AG04450 (cell line): ENCODE measurements at regions of chr3 and their contacts with region 1.

Region 1: DNA sequence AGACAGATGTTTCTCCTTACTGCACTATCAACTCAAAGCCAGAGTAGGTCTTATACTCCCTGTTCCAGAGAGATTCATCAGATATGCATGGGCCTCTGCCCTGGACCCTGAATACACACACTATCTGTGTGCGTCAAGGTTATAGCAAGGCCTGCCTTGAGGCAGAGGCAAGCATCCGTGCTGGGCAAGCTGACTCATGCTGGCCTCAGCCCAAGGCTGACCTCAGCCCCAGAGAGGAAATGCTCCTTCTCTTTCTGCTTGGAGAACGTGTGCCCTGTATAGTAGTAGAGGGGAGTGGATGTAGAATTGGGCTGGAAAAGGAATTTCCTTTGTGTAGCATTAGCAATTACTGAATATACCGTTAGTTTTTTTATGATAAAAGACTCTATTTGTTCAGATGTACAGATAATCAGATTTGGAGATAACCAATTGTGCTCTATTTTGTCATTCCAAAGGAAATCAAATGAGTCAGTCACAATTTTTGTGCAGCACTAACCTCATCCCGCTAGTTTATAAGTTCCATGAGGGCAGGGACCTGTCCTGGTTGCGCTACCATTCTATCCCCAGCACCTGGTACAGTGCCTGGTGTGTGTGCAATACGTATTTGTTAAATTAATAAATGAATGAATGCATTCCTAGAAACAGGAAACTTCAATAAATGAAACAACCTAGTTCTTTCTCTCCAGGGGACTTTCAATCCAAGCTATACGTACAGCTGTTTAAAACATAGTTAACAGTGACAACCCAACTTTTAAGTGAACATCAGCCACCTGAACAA is 13.3 kb upstream of the PAQR9 start:
- DNase-seq: peak; percentile 85
- H3K4me3 ChIP-seq: no peak overlapping the region
- H3K27ac ChIP-seq: peak overlapping the region; percentile 34
- H3K27me3 ChIP-seq: peaks cover 2% of the 10 kb centered on the region
- CTCF ChIP-seq: no peak

Region 2: GRCh38 chr3:142987080-142987700 is 10.4 kb after region 1 on chr3:
- CTCF ChIA-PET with region 1: interaction called, 11 read pairs
- POLR2A ChIA-PET with region 1: no interaction called
- DNase-seq: no peak
- H3K4me3 ChIP-seq: no peak overlapping the region
- H3K27ac ChIP-seq: no peak overlapping the region
- H3K27me3 ChIP-seq: no peaks in the 10 kb centered on the region
- CTCF ChIP-seq: peak; percentile 67

Region 3: DNA sequence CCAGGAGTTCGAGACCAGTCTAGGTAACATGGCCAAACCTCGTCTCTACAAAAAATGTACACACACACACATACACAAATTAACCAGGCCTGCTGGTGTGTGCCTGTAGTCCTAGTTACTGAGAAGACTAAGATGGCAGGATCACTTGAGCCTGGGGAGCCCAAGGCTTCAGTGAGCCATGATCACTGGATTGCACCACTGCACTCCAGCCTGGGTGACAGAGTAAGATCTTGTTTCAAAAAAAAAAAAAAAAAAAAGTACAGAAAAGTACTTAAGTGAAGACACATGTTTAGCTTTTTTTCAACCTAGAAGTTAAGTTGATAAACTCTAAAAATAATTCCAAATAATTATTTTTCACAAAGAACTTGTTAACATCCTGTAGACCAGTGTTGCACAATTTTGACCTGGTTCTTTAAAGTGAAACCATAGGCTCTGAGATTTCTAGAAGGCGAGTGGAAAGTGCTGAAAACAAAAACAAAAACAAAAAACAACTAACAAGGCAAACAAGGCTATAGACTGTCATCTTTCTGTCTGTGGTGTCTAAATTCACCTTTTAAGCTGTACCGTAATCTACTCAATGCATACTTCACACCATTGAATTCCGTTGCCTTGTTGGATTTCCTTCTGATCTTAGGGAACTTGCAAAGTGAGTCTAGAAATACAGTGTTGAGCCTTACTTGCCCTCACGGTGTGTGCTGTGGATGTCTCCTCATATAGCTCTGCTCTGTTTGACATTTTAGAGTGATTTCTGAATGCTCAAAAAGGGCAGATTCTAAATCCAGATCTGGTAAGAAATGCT is 206.3 kb after region 1 on chr3:
- CTCF ChIA-PET with region 1: no interaction called
- POLR2A ChIA-PET with region 1: no interaction called
- DNase-seq: no peak
- H3K4me3 ChIP-seq: no peak overlapping the region
- H3K27ac ChIP-seq: no peak overlapping the region
- H3K27me3 ChIP-seq: no peaks in the 10 kb centered on the region
- CTCF ChIP-seq: no peak